ENCODE measurements at regions of chr10 and their contacts with region 1.

Region 1: DNA sequence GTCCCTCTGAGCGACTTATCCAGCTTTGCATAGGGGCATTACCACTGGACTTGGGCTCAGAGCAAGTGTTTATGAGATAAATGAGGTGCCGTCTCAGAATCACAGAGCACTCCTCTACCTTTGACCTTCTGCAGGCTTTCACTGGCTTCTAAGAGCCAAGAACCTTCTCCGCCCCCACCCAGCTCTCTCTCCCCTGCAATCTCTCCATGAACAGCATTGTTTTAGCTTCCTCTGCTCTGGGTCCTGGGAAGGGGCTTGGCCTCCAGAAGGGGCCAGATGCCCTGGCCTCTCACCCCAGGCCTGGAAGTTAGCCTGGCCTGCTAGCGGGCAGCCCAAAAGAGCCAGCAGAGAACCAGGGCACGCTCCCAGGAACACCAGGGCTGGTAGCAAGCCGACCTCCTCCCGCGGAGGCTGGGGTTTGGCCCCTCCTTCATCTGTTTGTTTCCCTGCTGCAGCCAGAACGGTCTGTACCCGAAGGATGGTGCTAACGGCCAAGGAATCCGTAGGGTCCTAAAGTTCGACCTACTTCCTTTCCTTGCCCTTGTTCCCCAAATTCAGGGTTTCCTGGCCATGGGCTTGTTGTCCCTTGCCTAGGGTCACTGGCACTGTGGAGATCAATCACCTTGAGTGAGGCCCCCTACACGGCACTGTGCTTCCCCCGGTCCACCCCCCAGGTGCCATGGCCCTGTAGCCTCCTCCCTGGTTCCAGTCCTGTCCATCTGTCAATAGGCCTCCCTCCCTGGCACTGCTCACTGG is 18.7 kb upstream of the DDIT4 start:
- DNase-seq: peak; percentile 83 to 96
- H3K4me3 ChIP-seq: peak overlapping the region in 1 of 2 donors; percentile 23
- H3K27ac ChIP-seq: peak overlapping the region; percentile 91 to 97
- H3K4me1 ChIP-seq: peaks cover 43 to 71% of the 10 kb centered on the region in 2 donors
- H3K27me3 ChIP-seq: no peaks in the 10 kb centered on the region
- CTCF ChIP-seq: no peak

Region 2: DNA sequence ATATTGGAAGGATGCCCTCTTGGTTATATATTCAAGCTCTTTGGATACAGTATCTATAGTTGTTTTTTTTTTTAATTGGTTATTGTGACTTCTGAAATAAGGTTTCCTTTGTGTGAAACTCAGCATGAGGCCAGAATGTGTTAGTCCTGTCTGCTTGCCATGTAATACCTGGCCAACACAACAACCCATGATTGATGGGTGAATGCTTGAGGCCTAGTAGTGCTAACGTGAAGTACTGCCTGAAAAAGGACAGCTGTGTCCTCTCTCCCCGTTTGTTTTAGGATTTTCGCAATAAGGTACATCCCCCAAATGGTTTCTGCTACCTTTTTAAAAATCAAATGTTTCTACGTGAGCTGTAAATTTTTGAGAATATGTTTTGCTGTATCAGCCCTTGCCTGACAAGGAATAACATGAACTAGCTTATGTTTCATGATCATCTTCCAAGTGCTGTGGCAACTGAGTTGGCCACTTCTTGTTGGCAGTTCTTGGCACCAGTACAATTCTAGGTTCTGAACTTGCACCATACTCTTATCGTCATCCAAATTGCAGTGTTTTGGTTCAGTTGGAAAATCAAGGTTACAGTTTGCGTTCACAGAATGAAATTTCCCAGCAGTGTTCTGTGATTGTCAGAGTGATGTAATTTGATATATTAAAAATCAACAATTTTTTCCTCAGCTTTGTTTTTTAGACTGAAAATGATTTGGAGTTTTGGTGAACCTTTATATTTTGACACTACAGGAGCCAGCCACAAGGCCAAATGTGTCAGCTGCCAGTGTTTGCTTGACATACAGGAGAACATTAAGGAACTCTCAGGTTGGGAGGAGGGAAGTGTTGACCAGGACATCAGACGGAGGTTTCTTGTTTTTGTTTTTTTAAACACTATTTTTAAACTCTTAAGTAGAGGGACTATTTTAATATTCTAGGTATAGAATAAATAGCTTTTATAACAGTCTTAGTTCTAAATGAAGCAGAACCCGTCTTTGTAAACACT is 25.4 kb before region 1 on chr10:
- intact Hi-C with region 1: loop called (anchors 2 kb)
- DNase-seq: peak in 1 of 2 donors; percentile 74
- H3K4me3 ChIP-seq: no peak overlapping the region
- H3K27ac ChIP-seq: peak overlapping the region; percentile 83 to 88
- H3K4me1 ChIP-seq: peaks cover 4 to 34% of the 10 kb centered on the region in 2 donors
- H3K27me3 ChIP-seq: no peaks in the 10 kb centered on the region
- CTCF ChIP-seq: no peak

Region 3: DNA sequence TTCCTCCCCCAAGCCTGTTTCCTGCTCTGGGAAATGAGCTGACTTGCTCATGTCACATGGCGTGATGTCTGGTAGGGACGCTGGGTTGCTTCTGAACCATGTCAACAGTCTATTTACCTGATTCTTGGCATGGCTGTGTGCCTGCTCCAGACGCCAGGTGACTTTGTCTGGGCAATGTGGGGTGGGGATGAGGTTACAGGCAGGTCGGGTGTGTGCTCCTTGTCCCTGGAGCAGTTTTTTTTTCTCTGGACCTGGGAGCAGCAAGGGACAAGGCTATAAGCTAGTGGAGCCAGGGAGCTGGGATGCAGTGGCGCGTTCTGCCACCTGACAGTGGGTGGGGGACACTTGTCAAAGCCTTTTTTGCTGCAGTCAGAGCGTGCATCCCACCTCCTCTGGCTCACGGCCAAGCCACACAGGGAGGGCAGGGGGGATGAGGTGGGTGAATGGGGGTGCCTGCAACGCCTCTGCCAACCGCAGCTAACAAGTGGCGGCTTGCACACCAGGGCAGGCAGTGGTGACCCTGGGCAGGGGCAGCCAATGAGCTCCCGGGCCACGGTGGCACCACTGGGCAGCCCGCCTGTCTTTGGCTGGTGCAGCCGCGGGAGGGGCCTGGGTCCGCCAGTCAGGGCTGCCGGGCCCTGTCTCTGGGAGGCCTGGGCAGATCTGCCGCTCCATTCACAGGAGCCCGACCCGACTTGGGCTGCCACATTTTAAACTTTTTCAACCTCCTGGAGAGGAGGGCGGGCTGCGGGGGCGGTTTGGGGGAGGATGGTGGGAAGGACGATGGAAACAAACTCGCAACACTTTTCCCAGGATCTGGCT is 76.8 kb after region 1 on chr10:
- intact Hi-C with region 1: no loop called
- DNase-seq: peak; percentile 81 to 92
- H3K4me3 ChIP-seq: peak overlapping the region in 1 of 2 donors; percentile 27
- H3K27ac ChIP-seq: peak overlapping the region; percentile 66 to 94
- H3K4me1 ChIP-seq: peaks cover 0 to 59% of the 10 kb centered on the region in 2 donors
- H3K27me3 ChIP-seq: no peaks in the 10 kb centered on the region
- CTCF ChIP-seq: peak; percentile 22 to 38 (median 26)

Region 4: GRCh38 chr10:72455889-72456595 is 201.1 kb after region 1 on chr10:
- intact Hi-C with region 1: no loop called
- DNase-seq: no peak
- H3K4me3 ChIP-seq: no peak overlapping the region
- H3K27ac ChIP-seq: no peak overlapping the region
- H3K4me1 ChIP-seq: no peaks in the 10 kb centered on the region
- H3K27me3 ChIP-seq: no peaks in the 10 kb centered on the region
- CTCF ChIP-seq: no peak

Region 5: GRCh38 chr10:72563327-72563932 is 308.4 kb after region 1 on chr10:
- intact Hi-C with region 1: no loop called
- DNase-seq: no peak
- H3K4me3 ChIP-seq: no peak overlapping the region
- H3K27ac ChIP-seq: no peak overlapping the region
- H3K4me1 ChIP-seq: no peaks in the 10 kb centered on the region
- H3K27me3 ChIP-seq: no peaks in the 10 kb centered on the region
- CTCF ChIP-seq: no peak